CD8-positive, alpha-beta memory T cell (primary cell): ENCODE measurements at regions of chr12 and their contacts with region 1.

Region 1: DNA sequence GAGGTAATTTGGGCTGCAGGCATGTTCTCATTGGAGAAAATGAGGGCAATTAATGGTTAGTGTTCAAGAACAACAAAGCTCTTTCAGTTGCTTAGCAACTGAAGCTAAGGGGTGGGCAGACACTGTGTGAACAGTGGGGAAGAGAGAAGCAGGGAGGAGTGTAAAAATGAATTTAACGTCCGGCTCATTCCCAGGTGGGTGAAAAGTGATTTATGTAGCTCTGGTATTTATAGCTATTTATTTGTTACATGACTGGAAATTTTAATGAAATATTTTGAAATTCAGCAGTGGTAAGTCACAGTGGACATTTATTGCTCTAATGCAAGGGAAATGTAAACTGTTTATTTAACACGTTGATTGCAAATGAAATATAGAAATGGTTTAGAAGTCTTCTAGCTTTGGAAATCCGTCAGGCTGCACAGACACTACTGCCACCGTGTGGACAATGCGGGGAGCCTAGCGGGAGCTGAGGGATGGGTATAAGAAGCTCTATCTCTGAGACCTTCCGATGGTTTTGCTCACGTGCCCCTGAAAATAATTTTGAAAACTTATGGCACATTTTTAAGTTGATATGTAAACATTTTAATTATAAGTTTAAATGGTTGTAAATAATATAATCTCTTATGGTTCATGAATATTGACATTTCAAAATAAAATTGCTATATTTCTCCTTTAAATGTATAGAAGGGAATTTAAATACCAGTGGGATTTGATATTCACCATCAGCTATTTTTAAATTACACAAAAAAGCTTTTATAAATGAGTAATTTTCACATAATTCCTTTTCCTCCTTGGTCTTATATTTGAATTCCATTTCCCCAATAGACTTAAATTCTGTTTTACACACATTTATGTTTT is 54.4 kb downstream of the E2F7 start:
- DNase-seq: peak; percentile 19 to 71 (median 33)
- H3K4me3 ChIP-seq: no peak overlapping the region
- H3K4me3 Mint-ChIP-seq: peak overlapping the region in 1 of 7 donors; percentile 23
- H3K27ac ChIP-seq: no peak overlapping the region
- H3K27ac Mint-ChIP-seq: no peak overlapping the region
- H3K4me1 ChIP-seq: no peaks in the 10 kb centered on the region
- H3K4me1 Mint-ChIP-seq: peaks cover 4 to 6% (median 6%) of the 10 kb centered on the region in 3 donors
- H3K27me3 ChIP-seq: no peaks in the 10 kb centered on the region
- H3K27me3 Mint-ChIP-seq: peaks cover 6 to 33% of the 10 kb centered on the region in 2 donors

Region 2: DNA sequence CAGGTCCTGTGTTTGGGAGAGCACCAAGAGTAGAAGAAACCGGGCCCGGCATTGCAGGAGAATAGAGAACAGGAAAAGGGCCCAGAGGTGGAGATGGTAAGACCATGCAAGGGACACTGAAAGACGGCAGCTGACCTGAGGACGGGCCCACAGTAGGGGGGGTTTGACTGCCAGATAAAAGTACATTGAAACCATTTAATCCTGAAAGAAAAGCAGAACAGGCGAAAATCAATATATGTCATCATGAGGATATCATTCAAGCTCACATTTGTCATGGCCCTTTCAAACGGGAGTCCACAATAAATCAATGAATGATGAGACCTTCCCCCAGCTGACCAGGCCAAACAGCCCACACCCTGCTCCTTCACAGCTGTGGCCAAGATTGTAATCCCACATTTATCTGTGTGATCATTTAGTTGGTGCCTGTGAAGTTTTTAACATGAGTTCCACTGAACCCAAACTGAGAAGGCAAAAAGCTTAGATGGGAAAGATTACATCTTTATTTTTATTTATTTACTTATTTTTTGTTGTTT is 14.9 kb after region 1 on chr12:
- CTCF ChIA-PET with region 1: interaction called, 21 read pairs
- POLR2A ChIA-PET with region 1: no interaction called
- DNase-seq: no peak
- H3K4me3 ChIP-seq: no peak overlapping the region
- H3K4me3 Mint-ChIP-seq: no peak overlapping the region
- H3K27ac ChIP-seq: no peak overlapping the region
- H3K27ac Mint-ChIP-seq: peak overlapping the region in 1 of 8 donors; percentile 88
- H3K4me1 ChIP-seq: no peaks in the 10 kb centered on the region
- H3K4me1 Mint-ChIP-seq: no peaks in the 10 kb centered on the region
- H3K27me3 ChIP-seq: no peaks in the 10 kb centered on the region
- H3K27me3 Mint-ChIP-seq: no peaks in the 10 kb centered on the region

Region 3: GRCh38 chr12:77031745-77032144 is 20.8 kb after region 1 on chr12:
- CTCF ChIA-PET with region 1: interaction called, 10 read pairs
- POLR2A ChIA-PET with region 1: no interaction called
- DNase-seq: no peak
- H3K4me3 ChIP-seq: no peak overlapping the region
- H3K4me3 Mint-ChIP-seq: no peak overlapping the region
- H3K27ac ChIP-seq: no peak overlapping the region
- H3K27ac Mint-ChIP-seq: peak overlapping the region in 2 of 8 donors; percentile 26 to 32
- H3K4me1 ChIP-seq: no peaks in the 10 kb centered on the region
- H3K4me1 Mint-ChIP-seq: peaks cover 0 to 9% (median 4%) of the 10 kb centered on the region in 3 donors
- H3K27me3 ChIP-seq: no peaks in the 10 kb centered on the region
- H3K27me3 Mint-ChIP-seq: no peaks in the 10 kb centered on the region

Region 4: GRCh38 chr12:77256956-77257355 is 246.0 kb after region 1 on chr12:
- CTCF ChIA-PET with region 1: no interaction called
- POLR2A ChIA-PET with region 1: no interaction called
- DNase-seq: no peak
- H3K4me3 ChIP-seq: no peak overlapping the region
- H3K4me3 Mint-ChIP-seq: no peak overlapping the region
- H3K27ac ChIP-seq: no peak overlapping the region
- H3K27ac Mint-ChIP-seq: no peak overlapping the region
- H3K4me1 ChIP-seq: no peaks in the 10 kb centered on the region
- H3K4me1 Mint-ChIP-seq: no peaks in the 10 kb centered on the region
- H3K27me3 ChIP-seq: no peaks in the 10 kb centered on the region
- H3K27me3 Mint-ChIP-seq: no peaks in the 10 kb centered on the region